Ascending aorta (tissue), 2 donors: ENCODE measurements at regions of chr12 and their contacts with region 1.

Region 1: DNA sequence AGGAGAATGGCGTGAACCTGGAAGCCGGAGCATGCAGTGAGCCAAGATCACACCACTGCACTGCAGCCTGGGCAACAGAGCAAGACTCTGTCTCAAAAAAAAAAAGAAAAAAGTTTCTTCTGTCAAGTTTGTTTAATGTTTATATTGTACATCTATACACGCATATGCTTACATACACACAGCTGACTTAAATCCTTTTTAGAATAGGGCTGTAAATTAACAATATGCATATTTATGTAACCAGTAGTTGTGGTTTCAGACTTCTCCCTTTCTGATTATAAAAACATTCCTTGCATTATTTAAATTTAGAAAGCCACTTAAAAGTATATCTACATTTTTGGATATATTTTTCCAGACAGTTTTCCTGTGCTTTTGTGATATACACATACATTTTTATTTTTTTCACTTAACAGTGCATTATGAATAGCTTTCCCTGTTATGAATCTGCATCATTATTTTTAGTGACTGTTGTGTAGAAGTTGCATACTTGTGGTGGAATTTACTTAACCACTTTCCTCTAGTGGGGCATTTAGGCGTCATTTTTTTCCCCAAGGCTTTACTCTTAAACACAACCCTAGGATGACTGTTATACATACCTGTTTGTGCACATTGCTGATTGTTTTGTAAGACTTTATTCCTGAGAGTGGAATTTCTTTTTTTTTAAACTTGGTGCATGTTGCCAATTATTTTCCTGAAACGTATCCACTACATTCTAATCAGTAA is 29.4 kb downstream of the POLR3B start:
- DNase-seq: no peak
- H3K4me3 ChIP-seq: no peak overlapping the region
- H3K27ac ChIP-seq: no peak overlapping the region
- H3K4me1 ChIP-seq: no peaks in the 10 kb centered on the region
- H3K27me3 ChIP-seq: no peaks in the 10 kb centered on the region
- CTCF ChIP-seq: no peak

Region 2: GRCh38 chr12:106841510-106842302 is 454.7 kb after region 1 on chr12:
- intact Hi-C with region 1: loop called (anchors 2 kb)
- DNase-seq: no peak
- H3K4me3 ChIP-seq: no peak overlapping the region
- H3K27ac ChIP-seq: peak overlapping the region in 1 of 2 donors; percentile 50
- H3K4me1 ChIP-seq: peaks cover 0 to 3% of the 10 kb centered on the region in 2 donors
- H3K27me3 ChIP-seq: no peaks in the 10 kb centered on the region
- CTCF ChIP-seq: peak; percentile 25 to 60 (median 51)

Region 3: GRCh38 chr12:106919910-106920544 is 533.1 kb after region 1 on chr12:
- intact Hi-C with region 1: loop called (anchors 2 kb)
- DNase-seq: no peak
- H3K4me3 ChIP-seq: no peak overlapping the region
- H3K27ac ChIP-seq: no peak overlapping the region
- H3K4me1 ChIP-seq: no peaks in the 10 kb centered on the region
- H3K27me3 ChIP-seq: no peaks in the 10 kb centered on the region
- CTCF ChIP-seq: peak; percentile 72 to 80 (median 74)

Region 4: DNA sequence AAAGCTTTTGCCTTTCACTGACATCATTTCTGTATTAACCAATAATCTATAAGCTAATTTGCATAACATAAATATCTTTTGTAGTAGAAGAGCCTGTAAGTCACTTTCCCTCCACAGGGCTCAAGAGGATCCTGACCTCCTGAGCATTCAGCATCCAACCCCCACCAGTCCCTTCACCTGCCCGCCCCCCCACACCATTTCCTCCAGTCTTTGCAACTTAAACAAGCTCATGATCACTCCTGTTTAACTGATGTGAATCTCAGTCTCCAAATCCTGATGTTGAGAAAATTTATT is 718.4 kb after region 1 on chr12:
- intact Hi-C with region 1: loop called (anchors 2 kb)
- DNase-seq: no peak
- H3K4me3 ChIP-seq: no peak overlapping the region
- H3K27ac ChIP-seq: no peak overlapping the region
- H3K4me1 ChIP-seq: no peaks in the 10 kb centered on the region
- H3K27me3 ChIP-seq: no peaks in the 10 kb centered on the region
- CTCF ChIP-seq: no peak